ENCODE measurements at regions of chr17 and their contacts with region 1.

Region 1: GRCh38 chr17:63675607-63676413 is 24.1 kb downstream of the LIMD2 start:
- DNase-seq: peak; percentile 76
- ATAC-seq: peak; percentile 86
- H3K4me3 ChIP-seq: peak overlapping the region in 1 of 2 experiments; percentile 11; a peak in 2 of 4 replicates
- H3K27ac ChIP-seq: peak overlapping the region; percentile 77
- H3K4me1 ChIP-seq: peaks cover 24 to 26% of the 10 kb centered on the region in 2 experiments
- H3K27me3 ChIP-seq: no peaks in the 10 kb centered on the region
- CTCF ChIP-seq: no peak
- POLR2A ChIP-seq: no peak
- RAD21 ChIP-seq: 0 out of 2 replicates have a peak, but pooled peaks have one; percentile 9

Region 2: DNA sequence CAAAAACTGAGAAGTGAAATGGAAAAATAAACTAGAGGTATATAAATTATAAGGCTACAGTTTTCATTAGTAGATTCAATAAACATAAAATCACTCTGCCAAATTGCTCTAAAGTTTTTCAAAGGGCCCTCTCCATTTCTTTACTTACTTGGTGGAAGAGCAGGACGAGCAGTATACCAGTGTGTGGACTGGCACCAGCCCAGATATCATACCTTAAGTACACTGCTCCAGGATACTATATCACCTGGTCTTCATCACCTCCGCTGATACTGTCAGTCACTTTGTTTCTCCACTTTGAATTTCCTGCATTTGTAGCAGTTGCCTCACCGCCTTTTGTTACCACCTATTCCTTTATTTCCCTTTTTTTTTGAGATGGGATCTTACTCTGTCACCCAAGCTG is 16.0 kb before region 1 on chr17:
- CTCF ChIA-PET with region 1: no interaction called
- POLR2A ChIA-PET with region 1: no interaction called
- RAD21 ChIA-PET with region 1: no interaction called
- intact Hi-C with region 1: loop called (anchors 1 kb)
- DNase-seq: no peak
- ATAC-seq: no peak
- H3K4me3 ChIP-seq: no peak overlapping the region
- H3K27ac ChIP-seq: no peak overlapping the region
- H3K4me1 ChIP-seq: no peaks in the 10 kb centered on the region
- H3K27me3 ChIP-seq: no peaks in the 10 kb centered on the region
- CTCF ChIP-seq: no peak
- POLR2A ChIP-seq: no peak
- RAD21 ChIP-seq: no peak

Region 3: GRCh38 chr17:63722403-63722802 is 46.6 kb after region 1 on chr17:
- CTCF ChIA-PET with region 1: no interaction called
- POLR2A ChIA-PET with region 1: no interaction called
- RAD21 ChIA-PET with region 1: no interaction called
- intact Hi-C with region 1: no loop called
- DNase-seq: no peak
- ATAC-seq: no peak
- H3K4me3 ChIP-seq: no peak overlapping the region
- H3K27ac ChIP-seq: no peak overlapping the region
- H3K4me1 ChIP-seq: no peaks in the 10 kb centered on the region
- H3K27me3 ChIP-seq: no peaks in the 10 kb centered on the region
- CTCF ChIP-seq: no peak
- POLR2A ChIP-seq: no peak
- RAD21 ChIP-seq: no peak

Measured in HCT116 (cell line).